ENCODE measurements at regions of chr4 and their contacts with region 1.

Region 1: GRCh38 chr4:74376888-74377483 is 12.0 kb downstream of the EREG start:
- DNase-seq: no peak
- H3K4me3 Mint-ChIP-seq: no peak overlapping the region
- H3K27ac Mint-ChIP-seq: no peak overlapping the region
- H3K4me1 Mint-ChIP-seq: peaks cover 2% of the 10 kb centered on the region
- H3K27me3 Mint-ChIP-seq: peaks cover 8% of the 10 kb centered on the region

Region 2: GRCh38 chr4:74444891-74445642 is 68.1 kb after region 1 on chr4 and contains the start of gene AREG:
- intact Hi-C with region 1: loop called (anchors 5 kb)
- DNase-seq: peak; percentile 94
- H3K4me3 Mint-ChIP-seq: peak within 1 kb of the TSS; percentile 94
- H3K27ac Mint-ChIP-seq: peak within 1 kb of the TSS; percentile 85
- H3K4me1 Mint-ChIP-seq: peaks cover 15% of the 10 kb centered on the region
- H3K27me3 Mint-ChIP-seq: peaks cover 14% of the 10 kb centered on the region
- total RNA-seq, gene AREG: 1.4 TPM in 2 replicates

Region 3: DNA sequence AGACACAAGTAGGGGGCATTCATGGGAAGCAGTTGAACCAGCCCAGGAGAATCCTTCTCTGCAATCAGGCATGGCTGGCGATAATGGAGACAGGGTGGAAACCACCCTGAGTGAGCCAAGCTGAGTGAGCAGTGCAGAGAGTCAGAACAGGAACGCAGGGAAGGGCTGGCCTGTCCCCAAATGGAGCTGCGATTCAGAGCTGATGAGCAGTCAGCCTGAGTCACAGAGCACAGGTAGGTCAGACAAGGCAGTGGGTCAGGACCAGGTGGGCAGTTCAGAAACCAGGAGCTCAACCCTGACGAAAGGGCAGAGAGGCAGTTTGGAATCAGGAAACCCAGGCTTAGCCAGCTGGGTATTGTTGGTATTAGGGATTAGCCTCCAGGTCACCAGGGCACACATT is 288.4 kb after region 1 on chr4:
- intact Hi-C with region 1: no loop called
- DNase-seq: no peak
- H3K4me3 Mint-ChIP-seq: no peak overlapping the region
- H3K27ac Mint-ChIP-seq: no peak overlapping the region
- H3K4me1 Mint-ChIP-seq: no peaks in the 10 kb centered on the region
- H3K27me3 Mint-ChIP-seq: peaks cover 3% of the 10 kb centered on the region